MCF 10A (cell line): ENCODE measurements at regions of chr20 and their contacts with region 1.

Region 1: DNA sequence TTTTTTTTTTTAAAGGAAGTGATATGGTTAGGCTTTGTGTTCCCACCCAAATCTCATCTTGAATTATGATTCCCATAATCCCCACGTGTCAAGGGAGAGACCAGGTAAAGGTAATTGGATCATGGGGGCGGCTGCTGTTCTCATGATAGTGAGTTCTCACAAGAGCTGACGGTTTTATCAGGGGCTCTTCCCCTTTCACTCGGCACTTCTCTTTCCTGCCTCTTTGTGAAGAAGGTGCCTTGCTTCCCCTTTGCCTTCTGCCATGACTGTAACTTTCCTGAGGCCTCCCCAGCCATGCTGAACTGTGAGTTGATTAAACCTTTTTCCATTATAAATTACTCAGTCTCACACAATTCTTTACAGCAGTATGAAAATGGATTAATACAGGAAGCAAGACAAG is 64.3 kb downstream of the ZFP64 start:
- DNase-seq: no peak
- H3K4me3 Mint-ChIP-seq: no peak overlapping the region
- H3K27ac Mint-ChIP-seq: no peak overlapping the region
- H3K4me1 Mint-ChIP-seq: no peaks in the 10 kb centered on the region
- H3K27me3 Mint-ChIP-seq: no peaks in the 10 kb centered on the region
- CTCF ChIP-seq: no peak

Region 2: DNA sequence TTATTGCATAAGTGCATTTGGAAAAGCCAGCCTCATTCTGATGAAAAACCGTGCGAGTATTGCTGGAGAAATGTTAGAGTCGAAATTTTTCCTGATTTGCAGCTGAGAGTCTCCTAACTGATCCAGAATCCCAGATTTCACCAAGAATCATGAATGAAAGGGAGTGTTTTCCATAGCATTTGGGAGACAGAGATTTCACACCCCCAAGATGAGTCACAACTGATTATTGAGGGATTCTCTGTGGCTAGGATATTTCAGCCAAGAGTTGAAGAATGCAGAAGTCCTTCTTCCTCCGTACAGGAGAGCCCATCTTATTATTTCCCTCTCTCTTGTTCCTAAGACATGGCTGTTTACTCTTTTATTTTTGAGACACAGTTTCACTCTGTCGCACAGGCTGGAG is 242.7 kb before region 1 on chr20:
- CTCF ChIA-PET with region 1: no interaction called
- POLR2A ChIA-PET with region 1: no interaction called
- intact Hi-C with region 1: no loop called
- DNase-seq: peak; percentile 15
- H3K4me3 Mint-ChIP-seq: no peak overlapping the region
- H3K27ac Mint-ChIP-seq: no peak overlapping the region
- H3K4me1 Mint-ChIP-seq: no peaks in the 10 kb centered on the region
- H3K27me3 Mint-ChIP-seq: no peaks in the 10 kb centered on the region
- CTCF ChIP-seq: no peak

Region 3: DNA sequence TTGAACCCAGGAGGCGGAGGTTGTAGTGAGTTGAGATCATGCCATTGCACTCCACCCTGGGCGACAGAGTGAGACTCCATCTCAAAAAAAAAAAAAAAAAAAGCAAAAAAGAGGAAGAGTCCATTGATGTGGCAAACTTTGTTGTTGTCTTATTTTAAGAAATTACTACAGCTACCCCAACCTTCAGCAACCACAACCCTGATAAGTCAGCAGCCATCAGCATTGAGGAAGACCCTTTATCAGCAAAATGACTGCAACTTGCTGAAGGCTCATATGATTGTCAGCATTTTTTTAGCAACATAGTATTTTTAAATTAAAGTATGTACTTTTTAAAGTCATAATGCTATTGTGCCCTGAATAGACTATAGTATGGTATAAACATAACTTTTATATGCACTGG is 15.4 kb after region 1 on chr20:
- CTCF ChIA-PET with region 1: interaction called, 86 read pairs
- POLR2A ChIA-PET with region 1: interaction called, 4 read pairs
- intact Hi-C with region 1: no loop called
- DNase-seq: no peak
- H3K4me3 Mint-ChIP-seq: no peak overlapping the region
- H3K27ac Mint-ChIP-seq: no peak overlapping the region
- H3K4me1 Mint-ChIP-seq: no peaks in the 10 kb centered on the region
- H3K27me3 Mint-ChIP-seq: no peaks in the 10 kb centered on the region
- CTCF ChIP-seq: no peak

Region 4: GRCh38 chr20:52160621-52161204 is 33.4 kb after region 1 on chr20:
- CTCF ChIA-PET with region 1: interaction called, 43 read pairs
- POLR2A ChIA-PET with region 1: no interaction called
- intact Hi-C with region 1: no loop called
- DNase-seq: no peak
- H3K4me3 Mint-ChIP-seq: no peak overlapping the region
- H3K27ac Mint-ChIP-seq: no peak overlapping the region
- H3K4me1 Mint-ChIP-seq: no peaks in the 10 kb centered on the region
- H3K27me3 Mint-ChIP-seq: no peaks in the 10 kb centered on the region
- CTCF ChIP-seq: no peak

Region 5: DNA sequence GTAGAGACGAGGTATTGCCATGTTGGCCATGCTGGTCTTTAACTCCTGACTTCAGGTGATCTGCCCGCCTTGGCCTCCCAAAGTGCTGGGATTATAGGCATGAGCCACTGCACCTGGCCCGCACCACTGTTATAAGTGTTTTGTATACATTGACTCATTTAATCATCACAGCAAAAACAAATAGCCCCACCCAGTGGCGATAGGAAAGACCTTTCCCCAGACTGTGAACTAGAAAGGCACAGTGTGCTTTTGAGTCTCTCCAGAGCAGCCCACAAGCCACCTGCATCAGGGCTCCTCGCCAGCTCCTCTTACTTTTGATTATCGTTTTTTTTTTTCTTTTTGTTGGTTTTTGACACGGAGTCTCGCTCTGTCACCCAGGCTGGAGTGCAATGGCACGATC is 92.1 kb after region 1 on chr20:
- CTCF ChIA-PET with region 1: interaction called, 3 read pairs
- POLR2A ChIA-PET with region 1: no interaction called
- intact Hi-C with region 1: loop called (anchors 1 kb)
- DNase-seq: peak; percentile 52
- H3K4me3 Mint-ChIP-seq: no peak overlapping the region
- H3K27ac Mint-ChIP-seq: no peak overlapping the region
- H3K4me1 Mint-ChIP-seq: no peaks in the 10 kb centered on the region
- H3K27me3 Mint-ChIP-seq: peaks cover 4% of the 10 kb centered on the region
- CTCF ChIP-seq: no peak

Region 6: GRCh38 chr20:53547664-53548239 is 1420.4 kb after region 1 on chr20:
- CTCF ChIA-PET with region 1: interaction called, 22 read pairs
- POLR2A ChIA-PET with region 1: no interaction called
- intact Hi-C with region 1: loop called (anchors 1 kb)
- DNase-seq: peak; percentile 65
- H3K4me3 Mint-ChIP-seq: no peak overlapping the region
- H3K27ac Mint-ChIP-seq: no peak overlapping the region
- H3K4me1 Mint-ChIP-seq: no peaks in the 10 kb centered on the region
- H3K27me3 Mint-ChIP-seq: no peaks in the 10 kb centered on the region
- CTCF ChIP-seq: peak; percentile 91